AG04450 (cell line): ENCODE measurements at regions of chr18 and their contacts with region 1.

Region 1: GRCh38 chr18:22408059-22408458 is 9.7 kb downstream of the CTAGE1 start:
- DNase-seq: no peak
- H3K4me3 ChIP-seq: no peak overlapping the region
- H3K27ac ChIP-seq: no peak overlapping the region
- H3K27me3 ChIP-seq: peaks cover 10% of the 10 kb centered on the region
- CTCF ChIP-seq: no peak

Region 2: GRCh38 chr18:22238036-22238435 is 170.0 kb before region 1 on chr18:
- CTCF ChIA-PET with region 1: no interaction called
- POLR2A ChIA-PET with region 1: no interaction called
- DNase-seq: no peak
- H3K4me3 ChIP-seq: no peak overlapping the region
- H3K27ac ChIP-seq: no peak overlapping the region
- H3K27me3 ChIP-seq: peaks cover 12% of the 10 kb centered on the region
- CTCF ChIP-seq: no peak

Region 3: GRCh38 chr18:22703883-22704585 is 296.0 kb after region 1 on chr18:
- CTCF ChIA-PET with region 1: interaction called, 12 read pairs
- POLR2A ChIA-PET with region 1: no interaction called
- DNase-seq: no peak
- H3K4me3 ChIP-seq: no peak overlapping the region
- H3K27ac ChIP-seq: no peak overlapping the region
- H3K27me3 ChIP-seq: no peaks in the 10 kb centered on the region
- CTCF ChIP-seq: peak; percentile 61